ENCODE measurements at regions of chr20 and their contacts with region 1.

Region 1: DNA sequence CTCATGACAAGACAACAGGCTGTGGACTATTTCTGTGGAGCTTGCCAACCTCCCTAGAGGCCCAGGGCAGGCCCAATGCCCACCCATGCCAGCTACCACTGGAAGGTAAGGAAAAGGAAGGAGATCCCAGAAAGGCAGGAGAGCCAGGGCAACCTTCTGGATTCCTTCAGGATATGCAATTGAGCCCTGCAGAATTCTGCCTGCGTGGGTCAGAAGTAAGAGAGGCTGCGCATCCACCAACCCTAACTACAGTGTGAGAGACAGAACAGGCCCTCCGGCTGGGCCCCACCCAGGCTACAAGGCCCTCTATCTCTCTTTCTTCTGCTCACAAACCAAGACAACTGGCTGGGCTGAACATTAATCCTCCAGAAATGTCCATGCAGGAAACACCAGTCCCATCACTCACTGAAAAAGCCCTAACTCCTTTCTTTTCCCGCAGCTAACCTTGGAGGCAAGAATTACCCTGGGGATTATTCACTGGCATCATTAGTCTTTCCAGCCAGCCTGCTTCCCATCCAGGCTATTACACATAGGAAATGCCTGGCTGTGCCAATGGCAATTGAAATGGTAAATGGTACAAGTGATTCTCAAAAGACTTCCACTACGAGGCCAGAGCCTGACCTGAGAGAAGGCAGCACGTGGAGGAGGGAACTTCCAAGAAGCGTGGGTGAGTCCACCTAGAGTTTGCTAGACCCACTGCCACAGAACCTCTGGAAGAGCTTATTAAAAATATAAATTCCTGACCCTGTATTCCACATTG is 15.2 kb downstream of the MAP1LC3A start:
- DNase-seq: no peak
- H3K4me3 ChIP-seq: no peak overlapping the region
- H3K27ac ChIP-seq: no peak overlapping the region
- H3K4me1 ChIP-seq: peaks cover 3 to 13% (median 9%) of the 10 kb centered on the region in 4 experiments
- H3K27me3 ChIP-seq: no peaks in the 10 kb centered on the region

Region 2: DNA sequence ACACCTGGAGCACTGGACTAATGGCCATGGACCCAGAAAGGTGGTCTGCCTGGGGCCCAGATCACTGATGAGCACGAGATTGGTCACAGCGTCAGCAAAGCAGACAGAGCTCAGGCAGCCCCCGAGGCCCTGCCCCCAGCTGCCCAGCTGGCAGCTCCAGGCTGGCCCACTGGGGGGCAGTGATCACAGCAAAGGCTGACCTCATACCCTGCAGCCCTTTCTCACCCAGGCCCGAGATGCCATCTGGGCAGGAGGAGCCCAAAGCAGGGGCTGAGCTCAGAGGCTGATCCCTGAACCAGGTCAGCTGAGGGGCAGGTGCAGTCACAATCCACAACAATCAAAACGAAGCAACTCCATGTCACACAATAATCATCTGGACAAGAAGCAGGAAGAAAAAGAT is 11.1 kb before region 1 on chr20:
- CTCF ChIA-PET with region 1: interaction called, 17 read pairs
- POLR2A ChIA-PET with region 1: interaction called, 6 read pairs
- DNase-seq: peak; percentile 43 to 61 (median 61)
- H3K4me3 ChIP-seq: no peak overlapping the region
- H3K27ac ChIP-seq: no peak overlapping the region
- H3K4me1 ChIP-seq: peaks cover 3 to 7% (median 6%) of the 10 kb centered on the region in 4 experiments
- H3K27me3 ChIP-seq: no peaks in the 10 kb centered on the region